Right cardiac atrium (tissue), 5 donors: ENCODE measurements at regions of chr17 and their contacts with region 1.

Region 1: DNA sequence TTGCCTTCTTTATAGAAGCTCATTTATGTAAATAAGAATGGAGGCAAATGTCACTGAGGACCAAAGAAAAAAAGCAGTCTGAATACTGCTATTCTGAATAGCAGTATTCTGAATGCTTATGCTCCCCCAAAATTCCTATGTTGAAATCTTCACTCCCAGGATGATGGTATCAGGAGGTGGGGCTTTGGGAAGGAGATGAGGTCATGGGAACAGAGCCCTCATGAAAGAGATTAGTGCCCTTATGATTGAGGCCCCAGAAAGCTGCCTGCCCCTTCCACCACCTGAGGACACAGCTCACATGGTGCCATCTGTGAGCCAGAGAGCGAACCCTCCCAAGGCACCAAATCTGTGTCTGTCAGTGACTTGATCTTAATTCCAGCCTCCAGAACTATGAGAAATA is 28.8 kb downstream of the HEATR6 start:
- DNase-seq: no peak
- ATAC-seq: no peak
- H3K4me3 ChIP-seq: no peak overlapping the region
- H3K27ac ChIP-seq: no peak overlapping the region
- H3K4me1 ChIP-seq: no peaks in the 10 kb centered on the region
- H3K27me3 ChIP-seq: no peaks in the 10 kb centered on the region

Region 2: GRCh38 chr17:59914274-59914854 is 135.6 kb before region 1 on chr17:
- intact Hi-C with region 1: loop called in 1 of 4 experiments (anchors 10 kb)
- DNase-seq: no peak
- ATAC-seq: no peak
- H3K4me3 ChIP-seq: no peak overlapping the region
- H3K27ac ChIP-seq: no peak overlapping the region
- H3K4me1 ChIP-seq: no peaks in the 10 kb centered on the region
- H3K27me3 ChIP-seq: no peaks in the 10 kb centered on the region

Region 3: DNA sequence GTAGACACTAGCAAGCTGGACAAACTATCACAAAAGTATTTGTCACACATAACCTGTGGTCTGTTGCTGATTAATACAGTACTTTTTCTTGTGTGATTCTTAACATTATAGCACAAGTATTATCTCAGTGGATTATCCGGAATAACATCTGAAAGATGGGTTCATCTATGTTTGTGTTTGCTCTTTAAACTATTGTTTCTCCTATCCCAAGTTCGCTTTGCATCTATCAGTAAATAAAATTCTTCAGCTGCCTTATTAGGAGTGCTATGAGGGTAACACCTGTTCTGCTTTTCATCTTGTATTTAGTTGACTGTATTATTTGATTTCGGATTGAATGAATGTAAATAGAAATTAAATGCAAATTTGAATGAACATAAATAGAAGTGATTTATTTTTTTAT is 99.9 kb before region 1 on chr17:
- intact Hi-C with region 1: loop called in 1 of 4 experiments (anchors 10 kb)
- DNase-seq: no peak
- ATAC-seq: no peak
- H3K4me3 ChIP-seq: no peak overlapping the region
- H3K27ac ChIP-seq: no peak overlapping the region
- H3K4me1 ChIP-seq: no peaks in the 10 kb centered on the region
- H3K27me3 ChIP-seq: no peaks in the 10 kb centered on the region

Region 4: GRCh38 chr17:60127068-60128054 is 77.4 kb after region 1 on chr17:
- intact Hi-C with region 1: no loop called
- DNase-seq: no peak
- ATAC-seq: no peak
- H3K4me3 ChIP-seq: no peak overlapping the region
- H3K27ac ChIP-seq: no peak overlapping the region
- H3K4me1 ChIP-seq: no peaks in the 10 kb centered on the region
- H3K27me3 ChIP-seq: no peaks in the 10 kb centered on the region

Region 5: DNA sequence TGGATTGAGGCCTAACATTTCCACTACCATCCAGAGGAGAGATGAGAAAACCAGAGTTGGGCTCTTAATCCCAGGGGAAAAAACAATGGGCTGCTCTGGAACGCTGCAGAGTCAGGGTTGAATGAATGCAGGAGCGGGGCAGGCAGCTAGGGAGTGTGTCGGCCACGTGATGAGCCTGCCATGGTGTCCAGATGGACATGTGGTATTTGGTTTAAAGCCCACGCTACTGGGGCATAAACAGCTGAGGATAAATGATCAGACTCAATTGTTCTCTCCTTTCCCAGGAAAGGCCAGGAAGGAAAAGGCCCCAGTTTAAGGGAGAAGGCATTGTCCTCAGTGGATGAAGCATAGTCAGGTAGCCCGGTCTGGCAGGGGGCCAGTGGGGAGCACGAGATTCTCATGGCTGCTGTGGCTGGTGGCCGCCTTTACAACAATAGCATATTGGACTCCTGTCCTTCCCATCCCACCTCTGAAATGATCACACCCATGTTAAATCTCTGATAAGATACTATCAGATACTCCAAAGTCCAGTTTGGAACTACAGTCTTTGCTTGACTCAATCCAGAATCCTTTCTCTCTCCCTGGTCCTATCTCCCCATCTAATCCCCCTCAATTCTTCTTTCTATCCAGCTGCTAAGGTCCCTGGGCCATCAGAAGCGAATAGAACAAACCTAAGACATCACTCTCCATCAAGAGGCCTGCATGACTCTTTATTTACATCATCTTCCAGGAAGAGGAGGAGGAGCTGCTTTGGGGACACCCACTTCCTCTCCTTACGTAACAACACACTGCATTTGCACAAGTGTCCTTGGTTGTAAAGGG is 120.2 kb after region 1 on chr17:
- intact Hi-C with region 1: no loop called
- DNase-seq: peak in 2 of 3 donors; percentile 62 to 78
- ATAC-seq: peak; percentile 32 to 50
- H3K4me3 ChIP-seq: no peak overlapping the region
- H3K27ac ChIP-seq: no peak overlapping the region
- H3K4me1 ChIP-seq: peaks cover 6% of the 10 kb centered on the region
- H3K27me3 ChIP-seq: no peaks in the 10 kb centered on the region